Pancreas (tissue), 10 donors: ENCODE measurements at regions of chr10 and their contacts with region 1.

Region 1: DNA sequence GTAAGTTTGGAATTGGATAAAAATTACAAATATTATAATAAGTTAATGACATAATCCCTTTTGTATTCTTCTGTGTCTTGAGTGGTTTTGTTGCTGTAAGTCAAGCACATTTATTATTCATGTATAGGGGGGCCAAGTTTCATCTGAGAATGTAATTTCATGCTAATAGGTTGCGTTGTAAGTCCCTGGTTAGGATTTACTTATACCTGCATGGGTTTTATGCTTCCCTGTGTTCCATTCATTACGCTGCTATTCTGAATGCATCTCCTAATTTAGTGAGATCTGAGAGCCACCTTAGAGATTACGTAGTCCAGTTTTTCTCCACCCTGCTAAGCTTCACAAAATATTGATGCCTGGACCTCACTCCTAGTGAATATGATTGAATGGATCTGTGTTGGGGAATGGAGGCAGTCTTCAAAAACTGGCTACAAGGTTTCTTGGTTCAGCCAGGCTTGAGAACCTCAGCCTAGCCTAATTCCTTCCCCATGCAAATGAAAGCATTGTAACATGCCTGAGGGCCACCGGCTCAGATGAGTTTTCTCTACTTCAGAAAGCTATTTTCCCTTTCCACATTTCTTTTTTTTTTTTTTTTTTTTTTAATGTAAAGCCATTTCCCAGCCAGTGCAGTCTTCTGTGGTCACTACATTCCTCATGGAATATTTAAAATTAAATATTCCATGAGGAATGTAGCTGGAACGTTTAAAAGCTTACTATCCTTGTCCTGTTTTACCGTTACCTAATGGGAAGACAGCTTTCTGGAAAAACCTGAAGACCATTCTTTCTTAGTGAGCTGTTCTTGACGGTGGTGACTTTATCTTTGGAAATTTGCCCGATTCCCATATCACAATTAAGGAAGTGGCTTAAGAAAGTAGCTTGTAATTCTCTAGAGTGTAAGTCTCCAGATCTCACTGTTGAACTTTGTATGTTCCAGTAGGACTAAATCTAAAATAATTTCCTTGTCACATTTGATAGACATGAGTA is 16.0 kb downstream of the PAPSS2 start:
- DNase-seq: no peak
- ATAC-seq: peak in 3 of 4 donors; percentile 34 to 74 (median 48)
- H3K4me3 ChIP-seq: no peak overlapping the region
- H3K27ac ChIP-seq: no peak overlapping the region
- H3K4me1 ChIP-seq: peaks cover 0 to 5% (median 0%) of the 10 kb centered on the region in 3 donors
- H3K27me3 ChIP-seq: no peaks in the 10 kb centered on the region
- CTCF ChIP-seq: no peak

Region 2: GRCh38 chr10:86782701-86783418 is 892.8 kb before region 1 on chr10:
- intact Hi-C with region 1: no loop called
- DNase-seq: no peak
- ATAC-seq: no peak
- H3K4me3 ChIP-seq: no peak overlapping the region
- H3K27ac ChIP-seq: no peak overlapping the region
- H3K4me1 ChIP-seq: peaks cover 0 to 19% (median 7%) of the 10 kb centered on the region in 3 donors
- H3K27me3 ChIP-seq: no peaks in the 10 kb centered on the region
- CTCF ChIP-seq: no peak

Region 3: GRCh38 chr10:87723500-87723899 is 47.8 kb after region 1 on chr10:
- intact Hi-C with region 1: loop called in 1 of 3 experiments (anchors 10 kb)
- DNase-seq: no peak
- ATAC-seq: no peak
- H3K4me3 ChIP-seq: no peak overlapping the region
- H3K27ac ChIP-seq: no peak overlapping the region
- H3K4me1 ChIP-seq: no peaks in the 10 kb centered on the region
- H3K27me3 ChIP-seq: no peaks in the 10 kb centered on the region
- CTCF ChIP-seq: no peak

Region 4: DNA sequence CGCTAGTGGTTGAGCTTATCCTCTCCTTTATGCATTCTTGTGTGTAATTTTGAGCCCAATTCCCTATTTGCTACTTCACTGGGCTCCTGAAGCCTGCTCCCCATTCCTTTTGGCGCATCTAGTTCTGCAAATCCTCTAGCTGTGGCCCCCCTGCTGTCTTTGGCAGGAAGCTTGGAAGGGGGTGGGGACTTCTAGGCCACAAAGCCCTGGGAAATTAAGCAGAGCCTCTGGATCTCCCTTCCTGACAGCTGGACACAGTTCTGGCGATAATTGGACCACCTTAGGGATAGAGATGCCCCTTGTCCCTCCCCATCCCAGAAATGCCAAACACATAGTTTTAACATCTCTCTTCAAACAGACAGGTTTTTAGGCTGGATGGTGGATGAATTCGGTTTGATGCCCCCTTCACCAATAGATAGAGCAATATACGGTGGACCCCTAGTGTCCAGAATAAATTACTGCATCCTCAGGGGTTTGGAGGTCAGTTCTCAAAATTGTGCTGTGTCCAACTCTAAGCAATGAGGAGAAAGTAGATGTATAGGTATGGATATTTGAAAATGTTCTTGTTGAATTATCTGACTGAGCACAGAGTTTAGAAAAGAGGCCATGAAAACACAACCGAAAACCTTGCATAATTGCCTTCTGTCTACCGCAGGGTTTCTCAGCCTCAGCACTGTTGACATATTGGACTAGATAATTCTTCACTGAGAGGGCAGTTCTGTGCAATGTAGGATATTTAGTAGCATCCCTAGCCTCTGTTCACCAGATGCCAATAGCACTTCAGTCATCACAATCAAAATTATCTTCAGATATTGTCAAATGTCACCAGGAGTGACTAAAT is 59.5 kb after region 1 on chr10:
- intact Hi-C with region 1: no loop called
- DNase-seq: peak in 1 of 6 donors; percentile 32
- ATAC-seq: peak; percentile 58 to 93 (median 85)
- H3K4me3 ChIP-seq: no peak overlapping the region
- H3K27ac ChIP-seq: no peak overlapping the region
- H3K4me1 ChIP-seq: peaks cover 0 to 6% (median 5%) of the 10 kb centered on the region in 3 donors
- H3K27me3 ChIP-seq: no peaks in the 10 kb centered on the region
- CTCF ChIP-seq: peak; percentile 35 to 74 (median 64)

Region 5: GRCh38 chr10:89224739-89225443 is 1549.2 kb after region 1 on chr10:
- intact Hi-C with region 1: no loop called
- DNase-seq: peak in 1 of 6 donors; percentile 31
- ATAC-seq: peak in 3 of 4 donors; percentile 41 to 71 (median 69)
- H3K4me3 ChIP-seq: peak overlapping the region in 1 of 4 donors; percentile 13
- H3K27ac ChIP-seq: peak overlapping the region in 2 of 4 donors; percentile 13 to 52
- H3K4me1 ChIP-seq: no peaks in the 10 kb centered on the region
- H3K27me3 ChIP-seq: no peaks in the 10 kb centered on the region
- CTCF ChIP-seq: no peak